Sciatic nerve (tissue), 2 donors: ENCODE measurements at regions of chr12 and their contacts with region 1.

Region 1: DNA sequence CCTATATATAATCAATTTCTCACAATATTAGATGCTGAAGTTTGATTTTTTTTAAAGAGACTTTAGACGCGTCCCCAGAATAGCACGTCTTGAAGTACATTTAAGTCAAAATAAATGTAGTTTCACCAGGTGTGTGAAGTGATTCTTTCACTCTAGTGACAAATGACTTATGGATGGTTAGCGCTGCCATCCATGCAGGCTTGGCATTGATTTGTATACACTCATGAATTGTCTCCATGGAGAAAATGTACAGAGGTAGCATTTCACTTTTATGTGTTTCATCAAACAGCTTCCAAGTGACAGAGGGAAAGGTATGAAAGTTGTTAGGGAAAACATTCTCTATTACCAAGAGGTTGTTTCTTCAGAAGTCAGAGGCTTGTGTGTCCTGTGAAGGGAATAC is 360.8 kb downstream of the PDZRN4 start:
- DNase-seq: no peak
- ATAC-seq: no peak

Region 2: DNA sequence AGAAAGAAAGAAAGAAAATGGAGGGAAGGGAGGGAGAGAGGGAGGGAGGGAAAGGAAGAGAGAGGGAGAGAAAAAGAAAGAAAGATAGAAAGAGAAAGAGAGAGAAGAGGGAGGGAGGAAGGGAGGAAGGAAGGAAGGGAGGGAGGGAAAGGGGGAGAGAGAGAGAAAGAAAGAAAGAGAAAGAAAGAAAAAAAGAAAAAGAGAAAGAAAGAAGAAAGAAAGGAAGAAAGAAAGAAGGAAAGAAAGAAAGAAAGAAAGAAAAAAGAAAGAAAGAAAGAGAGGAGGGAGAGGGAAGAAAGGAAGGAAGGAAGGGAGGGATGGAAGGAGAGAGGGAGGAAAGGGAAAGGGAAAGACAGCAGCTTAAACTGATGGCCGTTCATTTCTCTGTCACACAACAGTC is 96.7 kb after region 1 on chr12:
- intact Hi-C with region 1: no loop called
- DNase-seq: no peak
- ATAC-seq: no peak

Region 3: GRCh38 chr12:41680155-41680554 is 131.2 kb after region 1 on chr12:
- intact Hi-C with region 1: no loop called
- DNase-seq: no peak
- ATAC-seq: no peak

Region 4: GRCh38 chr12:41850046-41850445 is 301.1 kb after region 1 on chr12:
- intact Hi-C with region 1: no loop called
- DNase-seq: no peak
- ATAC-seq: no peak

Region 5: DNA sequence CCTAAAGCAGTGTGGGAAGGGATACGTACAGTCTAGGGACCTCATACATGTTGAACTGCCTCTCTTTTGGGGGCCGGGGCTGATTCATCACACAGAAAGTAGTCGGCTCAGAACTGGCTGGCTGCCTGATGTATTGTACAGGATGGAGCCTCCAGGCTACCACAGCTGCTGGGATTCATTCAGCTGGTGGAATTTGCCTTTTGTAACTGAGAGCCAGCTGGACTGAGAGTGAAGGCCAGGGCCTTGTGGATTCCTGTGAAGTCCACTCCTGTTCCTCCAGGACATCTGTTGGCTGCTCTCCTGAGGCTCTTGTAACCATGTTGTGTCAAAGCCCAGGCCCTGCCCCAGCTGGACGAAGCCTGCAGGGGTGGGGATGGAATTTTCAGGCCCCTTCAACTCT is 1156.9 kb after region 1 on chr12:
- intact Hi-C with region 1: loop called (anchors 5 kb)
- DNase-seq: peak; percentile 71
- ATAC-seq: peak; percentile 91